Body of pancreas (tissue), 4 donors: ENCODE measurements at regions of chr16 and their contacts with region 1.

Region 1: DNA sequence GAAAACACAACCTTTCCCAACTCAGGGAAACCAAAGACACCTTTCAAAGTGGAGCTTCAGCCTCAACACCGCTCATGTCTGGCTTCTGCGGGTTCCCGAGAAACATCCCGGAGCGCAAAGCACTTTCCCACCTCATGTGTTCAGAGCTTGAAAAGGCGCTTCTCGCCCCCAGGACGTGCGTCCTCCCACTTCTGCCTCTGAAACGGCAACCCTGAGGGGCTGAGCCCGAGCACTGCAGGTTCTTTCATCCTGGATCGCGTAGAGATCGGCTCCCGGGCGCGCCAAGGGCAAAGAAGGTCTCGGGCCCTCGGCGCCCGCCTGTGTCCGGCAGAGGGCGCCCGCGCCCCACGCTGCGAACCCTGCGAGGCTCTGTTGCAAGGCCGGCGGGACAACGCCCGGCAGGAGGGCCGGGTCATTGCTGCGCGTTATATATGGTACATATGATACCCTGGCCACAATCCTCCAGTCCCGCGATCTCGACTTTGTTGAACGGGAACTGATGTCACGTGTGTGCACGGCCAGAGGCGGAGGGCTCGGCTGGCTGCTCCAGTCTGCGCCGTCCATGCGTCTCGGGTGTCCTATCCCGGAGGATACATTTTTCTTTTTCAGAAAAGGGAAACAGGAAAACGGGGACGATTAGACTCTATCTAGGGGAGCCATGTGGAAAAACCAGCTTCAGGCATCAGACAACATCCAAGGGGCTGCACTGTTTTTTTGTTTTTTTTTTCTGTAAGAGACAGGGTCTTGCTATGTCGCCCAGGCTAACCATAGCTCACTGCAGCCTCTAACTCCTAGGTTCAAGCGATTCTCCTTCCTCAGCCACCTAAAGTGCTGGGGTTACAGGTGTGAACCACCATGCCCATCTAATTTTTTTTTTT is 19.1 kb downstream of the COQ7 start:
- DNase-seq: peak; percentile 82 to 87 (median 84)
- ATAC-seq: peak; percentile 97
- H3K4me3 ChIP-seq: no peak overlapping the region
- H3K27ac ChIP-seq: no peak overlapping the region
- H3K4me1 ChIP-seq: peaks cover 15% of the 10 kb centered on the region
- H3K27me3 ChIP-seq: no peaks in the 10 kb centered on the region
- CTCF ChIP-seq: peak; percentile 93 to 100 (median 98)
- POLR2A ChIP-seq: peak in 1 of 3 donors; percentile 27

Region 2: DNA sequence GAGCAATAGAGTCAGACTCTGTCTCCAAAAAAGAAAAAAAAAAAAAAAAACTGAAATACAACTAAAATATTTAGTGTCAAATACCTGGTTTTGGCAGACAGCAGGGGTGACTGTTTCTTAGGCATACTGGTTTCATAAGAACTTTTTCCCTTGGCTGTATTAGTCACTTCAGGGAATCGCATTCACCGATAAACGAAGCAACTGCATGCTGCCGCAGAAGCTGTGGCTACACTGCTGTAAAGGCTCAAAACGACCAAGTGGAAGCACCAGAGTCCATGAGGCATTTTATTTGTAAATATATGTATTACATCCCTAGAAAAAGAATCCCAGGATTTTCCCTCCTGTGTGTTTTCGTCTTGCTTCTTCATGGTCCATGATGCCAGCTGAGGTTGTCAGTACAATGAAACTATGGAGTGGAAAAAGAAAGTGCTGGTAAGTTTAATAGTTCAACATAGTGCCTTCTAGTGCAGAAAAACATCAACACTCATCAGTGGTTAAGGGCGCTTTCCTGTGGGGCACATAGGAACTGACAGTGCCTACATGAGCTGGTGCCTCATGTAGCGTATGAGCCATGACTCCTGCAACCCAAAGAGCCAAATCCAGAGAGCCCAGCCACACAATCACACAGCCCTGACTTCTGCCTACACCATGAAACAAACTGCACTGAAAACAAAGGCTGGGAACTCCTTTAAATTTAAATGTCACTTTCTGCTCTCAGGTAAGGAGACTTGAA is 303.7 kb before region 1 on chr16:
- intact Hi-C with region 1: no loop called
- DNase-seq: no peak
- ATAC-seq: no peak
- H3K4me3 ChIP-seq: no peak overlapping the region
- H3K27ac ChIP-seq: no peak overlapping the region
- H3K4me1 ChIP-seq: peaks cover 27% of the 10 kb centered on the region
- H3K27me3 ChIP-seq: no peaks in the 10 kb centered on the region
- CTCF ChIP-seq: no peak
- POLR2A ChIP-seq: no peak

Region 3: DNA sequence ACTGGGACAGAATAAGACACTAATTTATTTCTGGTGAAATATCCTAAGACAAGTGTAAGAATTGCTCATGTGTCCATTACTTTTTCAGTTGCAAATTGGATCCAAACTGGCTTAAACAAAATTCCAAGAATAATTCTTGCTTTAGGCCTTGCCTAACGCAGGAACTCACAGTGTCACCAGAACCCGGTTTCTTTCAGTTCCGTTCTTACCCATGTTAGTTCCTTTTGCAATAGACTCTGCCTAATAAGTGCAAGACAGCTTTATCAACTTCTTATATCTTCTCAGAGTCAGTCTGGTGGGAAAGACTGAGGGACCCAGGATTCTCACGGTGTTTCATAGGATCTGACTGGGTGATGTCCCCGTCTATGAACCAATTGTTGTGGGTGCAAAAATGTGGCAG is 410.6 kb after region 1 on chr16:
- intact Hi-C with region 1: loop called (anchors 10 kb)
- DNase-seq: no peak
- ATAC-seq: no peak
- H3K4me3 ChIP-seq: no peak overlapping the region
- H3K27ac ChIP-seq: no peak overlapping the region
- H3K4me1 ChIP-seq: no peaks in the 10 kb centered on the region
- H3K27me3 ChIP-seq: no peaks in the 10 kb centered on the region
- CTCF ChIP-seq: no peak
- POLR2A ChIP-seq: no peak